ENCODE measurements at regions of chr9 and their contacts with region 1.

Region 1: DNA sequence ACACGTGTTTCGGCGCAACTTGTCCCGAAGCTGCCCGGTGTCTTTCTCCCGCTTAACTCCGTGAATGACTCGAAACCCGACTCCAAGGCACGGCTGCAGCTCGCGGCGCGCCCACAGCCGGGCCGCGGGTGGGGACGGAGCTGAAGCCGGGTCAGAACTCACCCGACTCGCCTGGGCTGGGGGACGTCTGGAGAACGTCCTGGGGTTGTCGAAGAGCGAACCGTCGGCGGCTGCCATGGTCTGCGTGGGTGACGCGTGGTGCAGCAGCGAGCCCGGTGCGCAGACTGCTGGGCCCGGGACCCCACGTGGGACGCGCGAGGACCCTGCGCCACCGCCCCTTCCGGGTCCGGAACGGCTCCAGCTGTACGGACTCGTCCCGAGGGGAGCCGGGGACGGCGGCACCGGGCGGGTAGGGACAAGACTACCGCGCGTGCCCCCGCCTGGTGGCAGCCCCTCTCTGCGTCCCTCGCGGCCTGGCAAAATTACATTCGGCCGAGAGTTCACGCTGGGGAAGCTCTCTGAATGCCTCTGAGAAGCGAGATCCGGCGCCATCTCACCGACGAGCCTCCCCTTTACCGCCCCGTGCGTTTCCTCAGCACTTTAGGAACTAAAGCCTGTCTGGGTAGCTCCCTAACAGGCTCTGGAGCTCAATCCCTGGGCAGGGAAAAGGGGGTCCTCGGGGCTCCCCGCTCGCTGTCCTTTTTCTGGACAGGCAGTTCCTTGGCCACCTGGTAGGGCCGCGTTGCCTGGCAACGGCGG is at the start of gene DDX31:
- DNase-seq: peak; percentile 75 to 93 (median 84)
- H3K4me3 ChIP-seq: peak within 1 kb of the TSS; percentile 78 to 100 (median 98)
- H3K27ac ChIP-seq: peak within 1 kb of the TSS; percentile 72 to 99 (median 97)
- H3K27me3 ChIP-seq: no peaks in the 10 kb centered on the region
- CTCF ChIP-seq: peak in 8 of 56 donors; percentile 6 to 30 (median 12)
- total RNA-seq, gene DDX31: 4.9 to 25.4 (median 9.5) TPM

Region 2: GRCh38 chr9:131668439-131669268 is 1001.2 kb before region 1 on chr9:
- intact Hi-C with region 1: no loop called
- DNase-seq: peak in 5 of 10 donors; percentile 36 to 74 (median 46)
- H3K4me3 ChIP-seq: peak overlapping the region in 3 of 59 donors; percentile 4 to 26 (median 12)
- H3K27ac ChIP-seq: peak overlapping the region in 57 of 59 donors; percentile 1 to 91 (median 77)
- H3K27me3 ChIP-seq: no peaks in the 10 kb centered on the region
- CTCF ChIP-seq: no peak

Region 3: GRCh38 chr9:132079391-132080091 is 590.3 kb before region 1 on chr9 and contains the start of gene MED27:
- intact Hi-C with region 1: loop called in 1 of 2 experiments (anchors 5 kb)
- DNase-seq: peak; percentile 91 to 96 (median 94)
- H3K4me3 ChIP-seq: peak within 1 kb of the TSS; percentile 62 to 98 (median 90)
- H3K27ac ChIP-seq: peak within 1 kb of the TSS in 54 of 59 donors; percentile 5 to 94 (median 74)
- H3K27me3 ChIP-seq: no peaks in the 10 kb centered on the region
- CTCF ChIP-seq: peak in 32 of 56 donors; percentile 4 to 49 (median 20)
- total RNA-seq, gene MED27: 17.8 to 40.0 (median 27.6) TPM

Region 4: DNA sequence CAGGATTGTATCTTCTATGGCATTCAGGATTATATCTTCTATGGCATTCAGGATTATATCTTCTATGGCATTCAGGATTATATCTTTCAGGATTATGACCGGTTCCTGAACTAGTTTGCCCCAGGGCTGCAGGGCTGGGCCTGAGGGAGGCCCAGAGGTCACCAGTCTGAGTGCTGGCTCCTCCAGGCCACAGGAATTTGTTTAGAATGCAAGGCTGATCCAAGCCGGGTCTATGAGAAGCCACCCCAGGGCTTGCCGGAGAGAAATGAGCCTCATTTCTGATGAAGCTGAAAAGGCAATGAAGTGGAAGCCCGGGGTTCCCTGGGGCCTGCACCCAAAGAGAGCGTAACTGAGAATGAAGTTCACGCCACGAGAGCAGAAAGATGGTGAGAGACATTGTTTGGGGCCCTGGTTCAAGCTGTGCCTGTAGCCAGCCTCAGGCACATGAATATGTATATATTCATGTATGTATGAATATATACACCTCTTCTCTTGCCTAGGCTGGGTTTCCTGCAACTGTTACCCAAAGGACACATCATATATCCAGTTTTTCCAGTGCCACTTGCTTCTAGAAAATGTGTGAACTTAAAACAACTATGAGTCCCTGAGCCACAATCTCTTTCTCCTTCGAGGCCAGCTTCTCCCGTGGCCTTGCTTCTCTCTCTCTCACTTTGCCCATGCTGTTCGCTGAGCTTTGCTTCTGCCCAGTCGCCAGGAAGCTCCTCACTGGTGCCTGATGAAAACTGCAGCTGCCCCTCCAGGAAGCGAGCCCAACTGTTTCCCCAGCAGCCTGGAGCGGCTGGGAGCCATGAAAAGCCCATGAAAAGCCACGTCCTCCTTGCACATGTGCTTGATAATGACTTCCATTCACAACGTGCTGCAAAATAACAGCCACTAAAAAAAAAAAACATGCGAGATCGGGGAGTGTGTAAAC is 62.7 kb after region 1 on chr9:
- intact Hi-C with region 1: no loop called
- DNase-seq: peak in 1 of 10 donors; percentile 44
- H3K4me3 ChIP-seq: peak overlapping the region in 44 of 59 donors; percentile 3 to 56 (median 29)
- H3K27ac ChIP-seq: peak overlapping the region in 29 of 59 donors; percentile 1 to 63 (median 40)
- H3K27me3 ChIP-seq: no peaks in the 10 kb centered on the region
- CTCF ChIP-seq: no peak

Region 5: DNA sequence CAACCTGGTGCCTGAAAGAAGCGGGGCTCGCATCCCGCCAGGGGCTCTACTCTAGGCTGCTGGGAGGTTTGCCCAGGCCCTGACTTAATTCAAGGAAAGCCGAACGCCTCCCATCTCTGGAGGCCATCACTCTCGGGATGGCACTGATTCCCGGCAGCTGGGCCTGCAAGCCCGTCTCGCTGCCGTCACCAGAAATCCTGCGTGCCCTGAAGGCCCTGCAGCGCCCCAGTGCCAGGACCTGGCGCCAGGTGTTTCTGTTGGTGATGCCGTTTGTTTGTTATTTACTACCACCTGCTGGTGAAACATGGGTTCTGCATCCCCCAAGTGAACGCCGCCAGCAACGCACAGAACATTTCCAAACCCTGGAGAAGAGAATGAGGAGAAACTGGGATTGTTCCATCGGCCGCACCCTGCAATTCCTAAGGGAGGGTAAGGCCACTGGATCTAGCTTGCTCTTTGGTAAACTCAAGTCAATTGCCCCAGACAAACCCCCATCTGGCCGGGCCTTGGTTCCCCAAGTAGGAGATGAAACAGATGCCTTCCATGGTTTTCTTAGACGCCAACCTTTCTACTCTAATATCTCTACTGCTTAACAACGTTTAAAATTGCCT is 130.3 kb after region 1 on chr9:
- intact Hi-C with region 1: loop called in 1 of 2 experiments (anchors 5 kb)
- DNase-seq: peak; percentile 70 to 86 (median 76)
- H3K4me3 ChIP-seq: peak overlapping the region in 26 of 59 donors; percentile 8 to 48 (median 28)
- H3K27ac ChIP-seq: peak overlapping the region in 1 of 59 donors; percentile 25
- H3K27me3 ChIP-seq: no peaks in the 10 kb centered on the region
- CTCF ChIP-seq: peak; percentile 65 to 98 (median 94)

Region 6: DNA sequence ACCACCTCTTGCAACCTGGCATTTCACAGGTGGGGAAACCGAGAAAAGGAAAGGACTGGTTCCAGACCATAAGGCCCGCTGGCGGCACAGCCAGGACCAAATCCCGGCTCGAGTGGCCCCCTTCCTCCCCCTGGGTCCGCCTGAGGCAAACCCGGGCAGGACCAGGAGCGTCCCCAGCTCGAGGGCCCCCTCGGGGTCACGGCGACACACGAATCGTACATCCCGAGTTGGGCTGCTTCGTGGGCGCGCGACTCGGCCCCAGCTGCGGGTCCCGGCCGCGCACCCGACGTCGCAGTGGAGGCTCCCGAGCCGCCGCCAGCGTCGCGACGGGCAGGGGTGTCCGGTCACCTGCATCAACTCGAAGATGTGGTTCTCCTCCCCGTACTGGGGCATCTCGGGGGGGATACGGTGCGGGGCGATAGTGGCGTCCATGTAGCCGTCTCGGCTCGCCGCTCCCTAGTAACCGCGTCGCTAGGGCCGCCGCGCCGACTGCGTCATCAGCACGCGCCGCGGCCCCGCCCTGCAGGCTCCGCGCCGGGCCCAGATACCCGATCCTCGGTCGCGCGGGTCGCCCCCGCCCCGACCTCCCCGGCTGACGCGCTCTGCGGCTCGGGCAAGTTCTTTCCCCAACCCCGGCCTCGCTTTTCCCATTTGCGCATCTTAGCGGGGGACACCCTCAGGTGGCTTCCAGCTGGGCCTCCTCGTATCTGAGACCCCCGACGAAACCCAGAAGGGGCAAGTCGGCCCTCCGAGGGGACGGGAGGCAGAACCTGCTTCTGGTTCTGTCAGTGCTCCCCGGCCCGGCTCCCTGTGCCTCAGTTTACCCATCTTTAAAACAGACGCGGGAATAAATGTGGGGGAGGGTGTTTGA is 208.2 kb after region 1 on chr9 and contains the start of gene AK8:
- intact Hi-C with region 1: loop called in 1 of 2 experiments (anchors 5 kb)
- DNase-seq: peak; percentile 51 to 86 (median 60)
- H3K4me3 ChIP-seq: peak within 1 kb of the TSS; percentile 60 to 99 (median 91)
- H3K27ac ChIP-seq: peak within 1 kb of the TSS in 51 of 59 donors; percentile 2 to 92 (median 69)
- H3K27me3 ChIP-seq: no peaks in the 10 kb centered on the region
- CTCF ChIP-seq: peak in 16 of 56 donors; percentile 4 to 37 (median 20)
- total RNA-seq, gene AK8: 0.77 to 10.6 (median 3.3) TPM

Region 7: GRCh38 chr9:132901856-132902831 is 232.3 kb after region 1 on chr9:
- intact Hi-C with region 1: loop called in 1 of 2 experiments (anchors 10 kb)
- DNase-seq: peak; percentile 54 to 92 (median 80)
- H3K4me3 ChIP-seq: peak overlapping the region in 1 of 59 donors; percentile 7
- H3K27ac ChIP-seq: peak overlapping the region in 42 of 59 donors; percentile 0 to 77 (median 44)
- H3K27me3 ChIP-seq: no peaks in the 10 kb centered on the region
- CTCF ChIP-seq: peak; percentile 83 to 99 (median 93)

Measured in dorsolateral prefrontal cortex (tissue), 120 donors.